ENCODE measurements at regions of chr3 and their contacts with region 1.

Region 1: DNA sequence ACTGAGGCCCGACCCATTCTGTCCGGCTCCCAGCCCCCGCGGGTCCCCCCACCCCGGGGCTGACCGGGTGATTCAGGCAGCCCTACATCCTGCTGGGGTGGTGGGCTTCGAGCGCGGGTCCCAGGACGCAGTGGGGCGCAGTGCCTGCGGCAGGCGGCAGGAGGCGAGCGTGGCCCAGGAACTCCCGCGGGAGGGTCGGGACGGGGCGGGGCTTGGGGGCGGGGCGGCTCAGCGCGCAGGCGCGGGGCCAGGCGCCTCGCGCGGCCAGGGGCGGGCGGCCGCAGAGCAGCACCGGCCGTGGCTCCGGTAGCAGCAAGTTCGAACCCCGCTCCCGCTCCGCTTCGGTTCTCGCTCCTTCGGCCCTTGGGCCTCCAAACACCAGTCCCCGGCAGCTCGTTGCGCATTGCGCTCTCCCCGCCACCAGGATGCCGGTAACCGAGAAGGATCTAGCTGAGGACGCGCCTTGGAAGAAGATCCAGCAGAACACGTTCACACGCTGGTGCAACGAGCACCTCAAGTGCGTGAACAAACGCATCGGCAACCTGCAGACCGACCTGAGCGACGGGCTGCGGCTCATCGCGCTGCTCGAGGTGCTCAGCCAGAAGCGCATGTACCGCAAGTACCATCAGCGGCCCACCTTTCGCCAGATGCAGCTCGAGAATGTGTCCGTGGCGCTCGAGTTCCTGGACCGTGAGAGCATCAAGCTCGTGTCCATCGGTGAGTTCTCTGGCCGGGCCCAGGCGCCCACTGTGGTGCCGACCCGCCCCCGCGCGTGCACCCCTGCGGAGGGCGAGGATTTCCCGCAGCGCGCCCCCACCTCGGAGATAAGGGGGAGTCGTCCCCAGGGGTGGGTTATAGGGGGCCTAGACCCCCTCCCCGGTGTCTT is at the start of gene FLNB:
- DNase-seq: no peak
- H3K4me3 ChIP-seq: peak within 1 kb of the TSS; percentile 77 to 95 (median 86)
- H3K27ac ChIP-seq: peak within 1 kb of the TSS; percentile 87 to 92 (median 88)
- H3K4me1 ChIP-seq: peaks cover 23 to 58% (median 49%) of the 10 kb centered on the region in 4 donors
- H3K27me3 ChIP-seq: no peaks in the 10 kb centered on the region
- CTCF ChIP-seq: peak; percentile 93 to 94 (median 94)
- EP300 ChIP-seq: no peak
- POLR2A ChIP-seq: peak; percentile 9
- total RNA-seq, gene FLNB: 61.9 to 114 (median 89.9) TPM

Region 2: DNA sequence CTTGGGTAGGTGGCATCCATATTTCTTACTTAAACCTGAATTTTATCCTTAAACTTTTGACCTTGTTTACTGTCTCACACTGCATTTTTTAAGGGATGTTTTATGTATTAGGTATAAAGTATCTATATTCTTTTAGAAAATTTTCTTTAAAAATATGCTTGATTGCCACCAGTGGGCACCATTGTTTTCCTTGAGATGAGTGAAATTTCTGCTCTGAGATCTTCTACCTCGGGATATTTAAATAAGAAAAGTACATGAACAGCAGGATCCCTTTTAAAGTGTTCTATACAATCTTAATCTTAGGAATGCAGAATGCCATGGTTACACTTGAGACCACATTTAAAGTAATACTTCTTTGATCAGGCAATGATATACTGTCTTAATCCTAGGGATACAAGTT is 143.5 kb before region 1 on chr3:
- intact Hi-C with region 1: loop called (anchors 10 kb)
- DNase-seq: no peak
- H3K4me3 ChIP-seq: no peak overlapping the region
- H3K27ac ChIP-seq: peak overlapping the region in 1 of 4 donors; percentile 55
- H3K4me1 ChIP-seq: peaks cover 0 to 3% (median 1%) of the 10 kb centered on the region in 4 donors
- H3K27me3 ChIP-seq: no peaks in the 10 kb centered on the region
- CTCF ChIP-seq: peak; percentile 60 to 68 (median 64)
- EP300 ChIP-seq: no peak
- POLR2A ChIP-seq: no peak

Region 3: DNA sequence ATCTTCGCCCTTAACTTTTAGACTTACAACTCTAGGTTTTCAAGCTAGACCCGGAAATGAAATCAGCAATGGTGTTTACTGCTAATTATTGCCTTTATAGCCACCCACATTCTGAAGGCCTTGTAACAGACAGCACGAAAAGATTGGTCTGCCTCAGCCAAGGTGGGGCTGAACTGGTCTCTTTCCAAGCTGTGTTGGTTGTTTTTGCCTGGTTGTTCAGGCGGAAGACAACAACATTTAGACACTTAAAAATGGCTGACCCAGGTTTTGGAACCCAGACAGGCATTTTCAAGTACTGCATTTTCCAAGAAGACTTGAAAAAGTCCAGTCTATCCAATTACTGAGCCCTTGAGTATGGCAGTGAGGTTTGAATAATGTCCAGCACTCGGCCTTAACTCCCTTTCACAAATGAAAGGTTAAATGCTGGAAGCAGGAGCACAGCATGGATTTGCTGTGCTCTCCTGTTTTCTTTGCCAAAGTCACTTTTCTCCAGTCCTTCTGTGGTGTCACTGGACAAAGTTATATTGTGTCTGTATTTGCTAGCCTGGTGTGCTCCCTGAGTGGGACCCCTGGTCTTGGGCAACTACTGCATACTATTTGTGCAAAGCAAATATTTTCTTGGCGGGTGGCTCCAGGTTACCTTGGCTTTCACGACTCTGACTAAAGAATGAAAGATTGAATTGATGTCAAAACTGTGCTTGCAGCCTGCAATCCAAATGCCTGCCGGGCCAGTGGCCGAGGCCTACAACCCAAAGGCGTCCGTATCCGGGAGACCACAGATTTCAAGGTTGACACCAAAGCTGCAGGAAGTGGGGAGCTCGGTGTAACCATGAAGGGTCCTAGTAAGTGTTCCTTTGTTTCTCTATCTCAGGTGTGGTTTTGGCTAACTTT is 93.4 kb after region 1 on chr3:
- intact Hi-C with region 1: loop called (anchors 5 kb)
- DNase-seq: no peak
- H3K4me3 ChIP-seq: no peak overlapping the region
- H3K27ac ChIP-seq: peak overlapping the region; percentile 47 to 68 (median 64)
- H3K4me1 ChIP-seq: peaks cover 5 to 48% (median 40%) of the 10 kb centered on the region in 4 donors
- H3K27me3 ChIP-seq: no peaks in the 10 kb centered on the region
- CTCF ChIP-seq: no peak
- EP300 ChIP-seq: no peak
- POLR2A ChIP-seq: no peak

Region 4: DNA sequence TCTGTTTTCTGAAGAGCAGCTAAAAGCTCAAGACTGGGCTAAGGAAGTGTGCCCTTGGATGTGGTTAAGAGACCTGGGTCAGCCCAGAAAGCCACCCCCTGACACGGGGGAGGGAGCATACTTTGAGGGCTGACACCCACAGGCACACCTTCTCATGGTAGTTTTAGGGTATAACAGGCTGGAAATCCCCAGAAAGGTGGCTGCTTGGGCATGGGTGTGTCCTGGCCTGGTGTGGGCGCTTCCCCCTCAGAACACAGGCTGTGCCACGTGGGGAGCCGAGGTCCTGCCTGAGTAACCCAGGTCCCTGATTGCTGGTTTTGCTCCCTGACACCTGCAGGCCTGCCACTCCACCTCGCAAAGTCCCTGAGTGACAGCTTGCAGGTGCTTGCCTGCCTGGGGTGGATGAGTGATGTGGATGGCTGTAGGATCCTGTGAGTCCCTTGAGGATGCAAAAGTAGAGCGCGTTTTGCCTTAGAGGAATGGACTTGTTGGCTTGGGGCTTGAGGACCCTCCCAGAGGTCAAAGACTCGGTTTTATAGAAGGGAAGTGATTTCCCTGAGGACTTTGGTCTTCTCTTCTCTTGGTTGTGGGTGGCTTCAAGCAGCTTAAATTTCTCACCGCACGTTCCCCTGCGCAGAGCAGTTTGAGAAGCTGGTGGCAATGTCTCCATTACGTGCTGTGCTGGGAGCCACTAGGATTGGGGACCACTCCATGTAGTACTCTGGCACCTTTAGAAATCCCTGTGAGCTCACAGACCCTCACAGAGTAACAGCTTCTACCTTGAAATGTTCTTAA is 108.0 kb after region 1 on chr3:
- intact Hi-C with region 1: no loop called
- DNase-seq: no peak
- H3K4me3 ChIP-seq: peak overlapping the region in 2 of 4 donors; percentile 7 to 20
- H3K27ac ChIP-seq: peak overlapping the region; percentile 71 to 83 (median 77)
- H3K4me1 ChIP-seq: peaks cover 23 to 69% (median 66%) of the 10 kb centered on the region in 4 donors
- H3K27me3 ChIP-seq: no peaks in the 10 kb centered on the region
- CTCF ChIP-seq: no peak
- EP300 ChIP-seq: no peak
- POLR2A ChIP-seq: no peak

Region 5: GRCh38 chr3:58177747-58178527 is 169.6 kb after region 1 on chr3:
- intact Hi-C with region 1: loop called (anchors 5 kb)
- DNase-seq: peak; percentile 97
- H3K4me3 ChIP-seq: peak overlapping the region; percentile 53 to 64 (median 56)
- H3K27ac ChIP-seq: peak overlapping the region in 3 of 4 donors; percentile 27 to 60 (median 44)
- H3K4me1 ChIP-seq: peaks cover 39 to 56% (median 52%) of the 10 kb centered on the region in 4 donors
- H3K27me3 ChIP-seq: no peaks in the 10 kb centered on the region
- CTCF ChIP-seq: peak; percentile 93 to 98 (median 93)
- EP300 ChIP-seq: no peak
- POLR2A ChIP-seq: no peak

Region 6: DNA sequence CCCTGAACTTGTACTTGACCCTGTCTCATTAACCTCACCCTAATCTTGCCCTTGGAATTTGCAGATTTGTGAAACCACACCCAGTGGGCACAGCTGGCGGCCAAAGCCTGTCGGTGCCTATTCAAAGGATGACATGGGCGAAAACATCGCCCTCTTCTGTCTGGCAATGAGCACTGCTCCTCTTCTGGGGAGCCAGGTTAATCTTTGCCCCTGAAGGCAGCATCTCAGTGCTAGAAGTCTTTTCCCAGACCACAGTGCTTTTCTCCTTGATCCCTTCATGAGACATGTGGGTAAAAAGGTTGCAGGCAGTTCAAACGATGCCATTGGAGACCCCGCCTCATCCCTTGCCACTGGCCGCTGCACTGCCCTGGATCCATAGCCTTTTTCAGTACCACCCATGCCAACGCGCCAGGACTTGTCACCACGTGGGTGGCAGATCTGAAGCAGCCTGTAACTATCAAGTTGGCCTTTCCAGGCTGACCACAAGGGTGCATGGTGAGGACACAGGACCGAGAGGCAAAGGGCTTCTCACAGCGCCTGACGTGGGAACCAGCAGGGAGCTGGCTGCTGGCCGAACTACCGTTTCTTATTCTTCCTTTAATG is 208.9 kb after region 1 on chr3:
- intact Hi-C with region 1: no loop called
- DNase-seq: no peak
- H3K4me3 ChIP-seq: no peak overlapping the region
- H3K27ac ChIP-seq: peak overlapping the region in 1 of 4 donors; percentile 40
- H3K4me1 ChIP-seq: peaks cover 12 to 21% (median 14%) of the 10 kb centered on the region in 4 donors
- H3K27me3 ChIP-seq: no peaks in the 10 kb centered on the region
- CTCF ChIP-seq: peak; percentile 69 to 82 (median 75)
- EP300 ChIP-seq: no peak
- POLR2A ChIP-seq: no peak

Region 7: DNA sequence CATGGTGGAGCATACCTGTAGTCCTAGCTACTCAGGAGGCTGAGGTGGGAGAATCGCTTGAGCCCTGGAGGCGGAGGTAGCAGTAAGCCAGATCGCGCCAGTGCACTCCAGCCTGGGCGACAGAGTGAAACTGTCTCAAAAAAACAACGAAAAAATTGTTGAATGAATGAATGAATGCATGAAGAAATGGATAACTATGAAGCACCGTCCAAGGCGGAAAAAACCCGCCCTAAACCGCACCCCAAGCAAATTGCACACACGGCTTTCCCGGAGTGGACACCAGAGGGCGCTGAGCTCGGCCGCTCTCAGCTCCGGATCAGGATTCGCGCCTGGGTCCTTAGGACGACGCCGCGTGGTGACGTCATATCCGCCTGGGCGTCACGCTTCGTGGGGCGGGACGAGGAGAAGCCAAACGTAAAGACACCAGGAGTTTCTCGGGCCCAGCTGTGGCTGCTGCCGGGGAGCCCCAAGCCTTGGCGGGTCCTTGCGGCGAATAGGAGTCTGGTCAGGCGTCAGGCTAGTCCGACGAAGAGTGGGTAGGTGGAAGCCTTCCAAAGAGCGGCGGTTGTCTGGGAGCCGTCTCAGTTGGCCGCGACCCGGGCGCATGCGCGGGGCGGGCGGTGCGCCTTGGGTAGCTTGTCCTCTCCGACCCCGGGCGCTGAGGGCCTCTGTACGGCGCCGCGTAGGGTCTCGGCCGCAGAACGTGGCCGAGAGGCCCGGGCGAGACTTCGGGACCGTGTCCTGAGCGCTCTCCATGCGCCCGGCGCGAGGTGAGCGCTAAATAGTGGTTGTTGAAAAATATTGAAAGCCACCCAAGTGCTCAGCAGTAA is 297.7 kb after region 1 on chr3 and contains the starts of genes HTD2 and RPP14:
- intact Hi-C with region 1: loop called (anchors 10 kb)
- DNase-seq: peak; percentile 100
- H3K4me3 ChIP-seq: peak within 1 kb of the TSS; percentile 73 to 87 (median 80)
- H3K27ac ChIP-seq: peak within 1 kb of the TSS; percentile 96 to 97 (median 96)
- H3K4me1 ChIP-seq: peaks cover 24 to 44% (median 38%) of the 10 kb centered on the region in 4 donors
- H3K27me3 ChIP-seq: peaks cover 0 to 5% (median 0%) of the 10 kb centered on the region in 4 donors
- CTCF ChIP-seq: peak; percentile 93 to 98 (median 97)
- EP300 ChIP-seq: no peak
- POLR2A ChIP-seq: peak; percentile 47
- total RNA-seq, gene HTD2: 7.5 to 12.3 (median 10.4) TPM
- total RNA-seq, gene RPP14: 9.1 to 16.0 (median 10.4) TPM

Measured in esophagus muscularis mucosa (tissue), 4 donors.